ENCODE measurements at regions of chrX and their contacts with region 1.

Region 1: GRCh38 chrX:103811858-103812257 is 20.2 kb downstream of the RAB9B start:
- DNase-seq: no peak
- H3K4me3 ChIP-seq: no peak overlapping the region
- H3K27ac ChIP-seq: no peak overlapping the region
- H3K4me1 ChIP-seq: peaks cover 20% of the 10 kb centered on the region
- CTCF ChIP-seq: no peak

Region 2: GRCh38 chrX:103789004-103789403 is 22.9 kb before region 1 on chrX:
- CTCF ChIA-PET with region 1: no interaction called
- POLR2A ChIA-PET with region 1: interaction called, 6 read pairs
- intact Hi-C with region 1: loop called (anchors 2 kb)
- DNase-seq: peak; percentile 73
- H3K4me3 ChIP-seq: peak overlapping the region; percentile 39
- H3K27ac ChIP-seq: peak overlapping the region; percentile 92
- H3K4me1 ChIP-seq: peaks cover 35% of the 10 kb centered on the region
- CTCF ChIP-seq: no peak

Measured in OCI-LY7 (cell line).